ENCODE measurements at regions of chr7 and their contacts with region 1.

Region 1: GRCh38 chr7:18177815-18178660 is 150.4 kb upstream of the PRPS1L1 start:
- DNase-seq: peak; percentile 95
- ATAC-seq: peak; percentile 82
- H3K4me3 ChIP-seq: peak overlapping the region; percentile 56
- H3K27ac ChIP-seq: peak overlapping the region; percentile 99
- H3K4me1 ChIP-seq: peaks cover 54% of the 10 kb centered on the region
- H3K27me3 ChIP-seq: no peaks in the 10 kb centered on the region
- CTCF ChIP-seq: no peak

Region 2: DNA sequence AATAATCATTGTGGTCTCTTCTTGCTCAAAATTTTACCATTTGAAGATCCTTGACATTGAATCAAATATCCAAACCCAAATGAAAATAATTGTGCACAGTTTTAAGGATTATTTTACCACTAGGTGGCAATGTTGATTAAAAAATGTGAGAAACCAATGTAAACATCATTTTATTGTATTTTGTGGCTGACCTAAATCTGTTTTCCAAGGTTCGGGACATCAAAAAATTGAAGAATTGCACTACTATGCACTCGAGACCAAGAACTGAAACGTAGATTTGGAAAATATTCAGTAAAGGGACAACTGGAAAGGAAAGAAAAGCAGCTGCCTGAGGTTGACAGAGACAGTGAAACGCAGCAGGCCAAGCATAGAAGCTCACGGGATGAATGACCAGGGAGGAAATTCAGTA is 497.1 kb before region 1 on chr7:
- CTCF ChIA-PET with region 1: no interaction called
- POLR2A ChIA-PET with region 1: no interaction called
- intact Hi-C with region 1: loop called (anchors 2 kb)
- DNase-seq: peak; percentile 79
- ATAC-seq: peak; percentile 29
- H3K4me3 ChIP-seq: peak overlapping the region; percentile 47; the same call in 1 of the 2 replicates
- H3K27ac ChIP-seq: peak overlapping the region; percentile 72
- H3K4me1 ChIP-seq: peaks cover 49% of the 10 kb centered on the region
- H3K27me3 ChIP-seq: no peaks in the 10 kb centered on the region
- CTCF ChIP-seq: peak; percentile 79

Region 3: DNA sequence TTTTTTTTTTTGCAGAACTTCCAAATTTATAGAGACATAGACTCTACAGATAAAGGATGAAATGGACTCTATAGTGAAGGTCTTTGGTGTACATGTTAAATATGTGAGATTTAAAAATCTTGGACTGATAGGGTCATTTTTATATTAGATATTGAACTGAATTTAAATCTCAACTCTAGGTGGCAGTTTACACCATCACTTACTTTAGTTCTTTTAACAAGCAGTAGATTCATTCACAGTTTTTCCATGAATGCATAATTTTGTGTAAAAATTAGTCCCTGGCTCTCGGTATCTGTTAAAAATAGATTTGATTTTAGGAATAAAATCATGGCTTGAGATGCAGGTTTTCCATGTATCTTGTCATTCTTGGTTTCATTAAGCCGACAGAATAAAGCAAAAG is 206.6 kb before region 1 on chr7:
- CTCF ChIA-PET with region 1: no interaction called
- POLR2A ChIA-PET with region 1: no interaction called
- intact Hi-C with region 1: loop called (anchors 2 kb)
- DNase-seq: peak; percentile 41
- ATAC-seq: no peak
- H3K4me3 ChIP-seq: no peak overlapping the region
- H3K27ac ChIP-seq: no peak overlapping the region
- H3K4me1 ChIP-seq: peaks cover 13% of the 10 kb centered on the region
- H3K27me3 ChIP-seq: no peaks in the 10 kb centered on the region
- CTCF ChIP-seq: peak; percentile 57

Region 4: DNA sequence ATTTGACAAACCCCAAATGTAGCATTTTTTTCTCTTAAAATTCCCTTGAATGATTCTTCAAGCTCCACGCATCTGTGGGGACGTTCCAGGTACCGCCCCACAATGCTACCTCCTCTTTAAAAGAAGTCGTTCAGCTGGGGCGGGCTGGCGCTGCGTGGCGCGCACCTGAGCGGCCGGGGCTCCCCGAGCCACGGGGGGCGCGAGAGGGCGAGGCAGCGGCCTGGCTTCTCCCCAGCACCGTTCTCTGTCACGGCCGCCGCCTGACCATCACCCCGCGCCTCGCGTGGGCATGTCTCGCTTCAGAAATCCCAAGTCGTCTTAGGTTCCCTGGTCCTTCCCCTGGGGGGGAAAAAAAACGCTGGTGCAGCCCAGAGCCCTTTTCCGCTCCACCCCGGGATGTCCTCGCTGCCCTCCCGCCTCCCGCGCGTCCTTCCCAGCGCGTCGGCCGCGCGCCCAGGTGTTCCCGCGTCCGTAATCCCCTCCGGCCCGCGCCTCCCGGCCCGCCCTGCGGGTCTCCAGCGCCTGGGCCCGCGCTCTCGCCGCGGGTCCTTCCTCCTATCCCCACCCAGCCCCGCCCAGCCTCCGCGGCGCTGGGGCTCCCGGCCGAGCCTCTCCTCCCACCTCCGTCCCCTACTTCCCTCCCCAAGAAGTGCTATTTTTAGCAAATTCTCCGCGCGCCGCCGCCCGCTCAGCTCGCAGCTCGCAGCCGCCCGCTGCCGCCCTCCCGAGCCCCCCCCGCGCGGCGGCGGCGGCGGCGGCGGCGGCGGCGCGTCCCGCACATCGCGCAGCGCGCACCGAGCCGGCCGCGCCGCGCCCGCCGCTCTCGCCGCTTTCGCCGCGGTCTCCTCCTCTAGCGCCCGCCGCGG is 91.6 kb before region 1 on chr7:
- CTCF ChIA-PET with region 1: no interaction called
- POLR2A ChIA-PET with region 1: no interaction called
- intact Hi-C with region 1: loop called (anchors 5 kb)
- DNase-seq: peak; percentile 36
- ATAC-seq: peak; percentile 68
- H3K4me3 ChIP-seq: peak overlapping the region; percentile 95
- H3K27ac ChIP-seq: no peak overlapping the region
- H3K4me1 ChIP-seq: no peaks in the 10 kb centered on the region; the same call in 1 of the 2 replicates
- H3K27me3 ChIP-seq: no peaks in the 10 kb centered on the region
- CTCF ChIP-seq: no peak; the same call in 1 of the 2 replicates

Region 5: GRCh38 chr7:18257711-18258110 is 79.7 kb after region 1 on chr7:
- CTCF ChIA-PET with region 1: no interaction called
- POLR2A ChIA-PET with region 1: interaction called, 17 read pairs
- intact Hi-C with region 1: no loop called
- DNase-seq: peak; percentile 65
- ATAC-seq: peak; percentile 100
- H3K4me3 ChIP-seq: no peak overlapping the region
- H3K27ac ChIP-seq: no peak overlapping the region
- H3K4me1 ChIP-seq: peaks cover 10% of the 10 kb centered on the region
- H3K27me3 ChIP-seq: no peaks in the 10 kb centered on the region
- CTCF ChIP-seq: no peak

Region 6: GRCh38 chr7:18295781-18296423 is 117.9 kb after region 1 on chr7:
- CTCF ChIA-PET with region 1: no interaction called
- POLR2A ChIA-PET with region 1: no interaction called
- intact Hi-C with region 1: loop called (anchors 2 kb)
- DNase-seq: no peak
- ATAC-seq: no peak
- H3K4me3 ChIP-seq: no peak overlapping the region
- H3K27ac ChIP-seq: 0 out of 2 replicates have a peak overlapping the region, but pooled peaks have one; percentile 13
- H3K4me1 ChIP-seq: 0 out of 2 replicates have a peak, but pooled peaks cover 10% of the 10 kb centered on the region
- H3K27me3 ChIP-seq: no peaks in the 10 kb centered on the region
- CTCF ChIP-seq: no peak

Region 7: GRCh38 chr7:18610331-18610948 is 432.4 kb after region 1 on chr7:
- CTCF ChIA-PET with region 1: no interaction called
- POLR2A ChIA-PET with region 1: no interaction called
- intact Hi-C with region 1: no loop called
- DNase-seq: peak; percentile 60
- ATAC-seq: no peak
- H3K4me3 ChIP-seq: no peak overlapping the region
- H3K27ac ChIP-seq: no peak overlapping the region
- H3K4me1 ChIP-seq: peaks cover 6% of the 10 kb centered on the region
- H3K27me3 ChIP-seq: no peaks in the 10 kb centered on the region
- CTCF ChIP-seq: peak; percentile 81

Measured in PC-3 (cell line).